ENCODE measurements at regions of chr2 and their contacts with region 1.

Region 1: GRCh38 chr2:24920098-24920808 is at the start of gene ADCY3:
- DNase-seq: peak; percentile 69 to 79 (median 72)
- H3K4me3 ChIP-seq: peak within 1 kb of the TSS; percentile 68
- H3K27ac ChIP-seq: peak within 1 kb of the TSS; percentile 79 to 84
- H3K4me1 ChIP-seq: peaks cover 20% of the 10 kb centered on the region
- H3K27me3 ChIP-seq: no peaks in the 10 kb centered on the region
- CTCF ChIP-seq: no peak
- EP300 ChIP-seq: no peak
- POLR2A ChIP-seq: peak; percentile 15
- total RNA-seq, gene ADCY3: 27.1 to 150 (median 97.4) TPM

Region 2: DNA sequence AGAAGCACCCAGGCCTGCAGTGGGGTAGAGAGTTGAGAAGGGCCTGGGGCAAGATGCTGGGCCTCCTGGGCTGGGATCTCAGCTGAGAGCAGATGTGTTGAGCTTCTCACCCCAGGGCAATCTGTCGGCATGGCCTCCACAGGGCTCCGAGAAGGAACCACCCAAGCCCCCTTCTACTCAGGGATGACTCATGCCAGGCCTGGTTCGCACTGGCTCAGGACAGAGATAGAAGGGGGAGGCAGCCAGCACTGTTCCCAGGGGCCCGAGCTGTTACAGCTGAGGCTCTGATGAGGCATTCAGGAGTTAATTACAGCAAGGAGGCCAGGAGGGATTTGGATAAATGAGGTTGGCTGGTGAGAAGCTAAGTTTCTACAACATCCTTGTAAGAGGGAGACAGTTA is 64.5 kb before region 1 on chr2:
- intact Hi-C with region 1: loop called in 2 of 4 experiments (anchors 5 kb)
- DNase-seq: peak; percentile 75 to 85 (median 82)
- H3K4me3 ChIP-seq: no peak overlapping the region
- H3K27ac ChIP-seq: peak overlapping the region; percentile 81 to 90
- H3K4me1 ChIP-seq: peaks cover 38% of the 10 kb centered on the region
- H3K27me3 ChIP-seq: no peaks in the 10 kb centered on the region
- CTCF ChIP-seq: no peak
- EP300 ChIP-seq: no peak
- POLR2A ChIP-seq: no peak

Region 3: GRCh38 chr2:24875272-24875671 is 45.0 kb before region 1 on chr2:
- intact Hi-C with region 1: loop called in 1 of 4 experiments (anchors 5 kb)
- DNase-seq: no peak
- H3K4me3 ChIP-seq: no peak overlapping the region
- H3K27ac ChIP-seq: no peak overlapping the region
- H3K4me1 ChIP-seq: peaks cover 24% of the 10 kb centered on the region
- H3K27me3 ChIP-seq: no peaks in the 10 kb centered on the region
- CTCF ChIP-seq: no peak
- EP300 ChIP-seq: no peak
- POLR2A ChIP-seq: no peak

Region 4: GRCh38 chr2:25098670-25099486 is 178.6 kb after region 1 on chr2:
- intact Hi-C with region 1: no loop called
- DNase-seq: peak; percentile 28 to 72 (median 57)
- H3K4me3 ChIP-seq: no peak overlapping the region
- H3K27ac ChIP-seq: peak overlapping the region; percentile 45 to 80
- H3K4me1 ChIP-seq: peaks cover 7% of the 10 kb centered on the region
- H3K27me3 ChIP-seq: no peaks in the 10 kb centered on the region
- CTCF ChIP-seq: no peak
- EP300 ChIP-seq: no peak
- POLR2A ChIP-seq: no peak

Region 5: DNA sequence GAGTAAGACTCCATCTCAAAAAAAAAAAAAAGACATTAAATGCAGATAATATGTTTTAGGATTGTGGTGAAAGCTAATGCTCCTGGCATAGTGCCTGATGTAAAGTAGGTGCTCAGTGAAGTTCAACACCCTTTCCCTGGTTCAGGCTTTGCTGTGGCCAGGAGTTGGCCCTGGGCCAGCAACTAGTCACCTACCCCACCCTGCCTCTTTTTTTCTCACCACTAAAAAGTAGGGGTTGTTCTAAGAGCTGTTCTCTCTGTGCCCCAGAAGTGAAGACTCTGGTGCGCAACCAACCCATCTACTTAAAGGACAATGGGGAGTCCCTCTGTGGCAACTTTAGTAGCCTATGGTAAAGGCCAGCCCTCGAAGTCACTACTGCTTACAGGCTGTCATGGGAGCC is 345.5 kb after region 1 on chr2:
- intact Hi-C with region 1: no loop called
- DNase-seq: no peak
- H3K4me3 ChIP-seq: no peak overlapping the region
- H3K27ac ChIP-seq: no peak overlapping the region
- H3K4me1 ChIP-seq: peaks cover 1% of the 10 kb centered on the region
- H3K27me3 ChIP-seq: no peaks in the 10 kb centered on the region
- CTCF ChIP-seq: no peak
- EP300 ChIP-seq: no peak
- POLR2A ChIP-seq: no peak